ENCODE measurements at regions of chr9 and their contacts with region 1.

Region 1: GRCh38 chr9:125746017-125746773 is 978 bp upstream of the PBX3 start:
- DNase-seq: peak; percentile 88
- H3K4me3 Mint-ChIP-seq: peak overlapping the region; percentile 80
- H3K27ac Mint-ChIP-seq: peak overlapping the region; percentile 95
- H3K4me1 Mint-ChIP-seq: peaks cover 40% of the 10 kb centered on the region
- H3K27me3 Mint-ChIP-seq: peaks cover 28% of the 10 kb centered on the region

Region 2: GRCh38 chr9:125706661-125707471 is 39.3 kb before region 1 on chr9 and contains the start of gene MAPKAP1:
- intact Hi-C with region 1: loop called (anchors 1 kb)
- DNase-seq: peak; percentile 89
- H3K4me3 Mint-ChIP-seq: peak within 1 kb of the TSS; percentile 85
- H3K27ac Mint-ChIP-seq: peak within 1 kb of the TSS; percentile 78
- H3K4me1 Mint-ChIP-seq: peaks cover 29% of the 10 kb centered on the region
- H3K27me3 Mint-ChIP-seq: no peaks in the 10 kb centered on the region
- total RNA-seq, gene MAPKAP1: 77.9 and 83.8 TPM in 2 replicates

Region 3: GRCh38 chr9:125829743-125830142 is 83.5 kb after region 1 on chr9:
- intact Hi-C with region 1: loop called (anchors 10 kb)
- DNase-seq: peak; percentile 35
- H3K4me3 Mint-ChIP-seq: peak overlapping the region; percentile 39
- H3K27ac Mint-ChIP-seq: no peak overlapping the region
- H3K4me1 Mint-ChIP-seq: peaks cover 17% of the 10 kb centered on the region
- H3K27me3 Mint-ChIP-seq: no peaks in the 10 kb centered on the region

Measured in activated T-helper 2 cell treated with anti-CD3 and anti-CD28 coated beads, Interferon-gamma antibody, Interleukin-2, Interleukin-4, amounts not matched to agents 10 μg/mL and 5 μg/mL and 100 μg/mL, durations not matched to agents 14 hours and 24 hours and 36 hours (primary cell).